GM12878 (cell line): ENCODE measurements at regions of chr3 and their contacts with region 1.

Region 1: GRCh38 chr3:134614955-134615354 is 35.9 kb downstream of the KY start:
- DNase-seq: no peak
- ATAC-seq: no peak
- H3K4me3 ChIP-seq: no peak overlapping the region
- H3K27ac ChIP-seq: no peak overlapping the region
- H3K4me1 ChIP-seq: no peaks in the 10 kb centered on the region
- H3K27me3 ChIP-seq: peaks cover 0 to 2% of the 10 kb centered on the region in 2 experiments; a peak in 3 of 4 replicates
- CTCF ChIP-seq: no peak
- EP300 ChIP-seq: no peak
- POLR2A ChIP-seq: no peak
- RAD21 ChIP-seq: no peak

Region 2: GRCh38 chr3:134640872-134641470 is 26.0 kb after region 1 on chr3:
- CTCF ChIA-PET with region 1: interaction called, 10 read pairs
- POLR2A ChIA-PET with region 1: no interaction called
- RAD21 ChIA-PET with region 1: no interaction called
- SMC1A ChIA-PET with region 1: no interaction called
- in situ Hi-C with region 1: no loop called
- intact Hi-C with region 1: no loop called
- DNase-seq: no peak
- ATAC-seq: peak; percentile 68
- H3K4me3 ChIP-seq: no peak overlapping the region
- H3K27ac ChIP-seq: no peak overlapping the region
- H3K4me1 ChIP-seq: no peaks in the 10 kb centered on the region
- H3K27me3 ChIP-seq: no peaks in the 10 kb centered on the region
- CTCF ChIP-seq: peak; percentile 36 to 54 (median 49); a peak in 4 of 6 replicates
- EP300 ChIP-seq: no peak
- POLR2A ChIP-seq: no peak
- RAD21 ChIP-seq: peak; percentile 18; the same call in 1 of the 2 replicates